T-cell (primary cell): ENCODE measurements at regions of chr5 and their contacts with region 1.

Region 1: GRCh38 chr5:160399402-160400353 is at the start of gene FAM200C:
- DNase-seq: peak in 34 of 35 experiments; percentile 14 to 74 (median 34)
- ATAC-seq: peak; percentile 78 to 86 (median 80)
- H3K4me3 ChIP-seq: peak within 1 kb of the TSS; percentile 72 to 84
- H3K4me3 Mint-ChIP-seq: peak within 1 kb of the TSS; percentile 89 to 95 (median 90)
- H3K27ac ChIP-seq: peak within 1 kb of the TSS; percentile 1
- H3K27ac Mint-ChIP-seq: peak within 1 kb of the TSS; percentile 73 to 82
- H3K4me1 ChIP-seq: peaks cover 2 to 8% of the 10 kb centered on the region in 2 experiments
- H3K4me1 Mint-ChIP-seq: peaks cover 21 to 23% (median 21%) of the 10 kb centered on the region in 3 donors
- H3K27me3 ChIP-seq: no peaks in the 10 kb centered on the region
- H3K27me3 Mint-ChIP-seq: no peaks in the 10 kb centered on the region
- total RNA-seq, gene FAM200C: 0.12 to 0.76 (median 0.58) TPM in 4 of 5 donors, not detected in the other

Region 2: GRCh38 chr5:159805021-159805420 is 594.7 kb before region 1 on chr5:
- CTCF ChIA-PET with region 1: interaction called in 1 of 2 experiments, 11 read pairs
- POLR2A ChIA-PET with region 1: no interaction called
- DNase-seq: peak in 1 of 35 experiments; percentile 14
- ATAC-seq: no peak
- H3K4me3 ChIP-seq: no peak overlapping the region
- H3K4me3 Mint-ChIP-seq: no peak overlapping the region
- H3K27ac ChIP-seq: no peak overlapping the region
- H3K27ac Mint-ChIP-seq: no peak overlapping the region
- H3K4me1 ChIP-seq: no peaks in the 10 kb centered on the region
- H3K4me1 Mint-ChIP-seq: no peaks in the 10 kb centered on the region
- H3K27me3 ChIP-seq: peaks cover 0 to 2% of the 10 kb centered on the region in 2 experiments
- H3K27me3 Mint-ChIP-seq: peaks cover 30 to 35% of the 10 kb centered on the region in 2 donors

Region 3: GRCh38 chr5:160333721-160334120 is 66.0 kb before region 1 on chr5:
- CTCF ChIA-PET with region 1: no interaction called
- POLR2A ChIA-PET with region 1: no interaction called
- DNase-seq: no peak
- ATAC-seq: no peak
- H3K4me3 ChIP-seq: no peak overlapping the region
- H3K4me3 Mint-ChIP-seq: no peak overlapping the region
- H3K27ac ChIP-seq: no peak overlapping the region
- H3K27ac Mint-ChIP-seq: no peak overlapping the region
- H3K4me1 ChIP-seq: no peaks in the 10 kb centered on the region
- H3K4me1 Mint-ChIP-seq: peaks cover 0 to 4% (median 2%) of the 10 kb centered on the region in 3 donors
- H3K27me3 ChIP-seq: peaks cover 0 to 3% of the 10 kb centered on the region in 2 experiments
- H3K27me3 Mint-ChIP-seq: peaks cover 2 to 7% of the 10 kb centered on the region in 2 donors

Region 4: DNA sequence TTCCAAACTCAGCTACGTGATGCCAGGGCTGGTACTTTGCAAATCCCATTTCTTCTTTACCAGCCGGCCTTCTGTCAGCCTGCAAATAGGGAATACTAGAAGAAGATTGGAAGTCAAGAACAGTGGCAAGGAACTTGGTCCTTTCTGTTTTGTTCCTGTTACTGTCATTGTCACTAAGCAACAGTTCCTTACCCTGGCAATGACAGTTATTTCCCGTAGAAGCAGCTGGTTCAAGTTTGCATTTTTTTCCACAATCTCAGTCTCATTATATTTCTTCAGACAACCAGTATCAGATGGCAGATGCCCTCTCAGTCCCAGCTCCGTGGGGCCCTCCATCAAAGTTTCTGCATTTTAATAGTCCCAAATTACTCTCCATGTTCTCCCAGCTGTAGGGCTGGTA is 20.2 kb before region 1 on chr5:
- CTCF ChIA-PET with region 1: no interaction called
- POLR2A ChIA-PET with region 1: no interaction called
- DNase-seq: no peak
- ATAC-seq: no peak
- H3K4me3 ChIP-seq: no peak overlapping the region
- H3K4me3 Mint-ChIP-seq: no peak overlapping the region
- H3K27ac ChIP-seq: no peak overlapping the region
- H3K27ac Mint-ChIP-seq: no peak overlapping the region
- H3K4me1 ChIP-seq: no peaks in the 10 kb centered on the region
- H3K4me1 Mint-ChIP-seq: no peaks in the 10 kb centered on the region
- H3K27me3 ChIP-seq: no peaks in the 10 kb centered on the region
- H3K27me3 Mint-ChIP-seq: peaks cover 30 to 31% of the 10 kb centered on the region in 2 donors

Region 5: GRCh38 chr5:160418561-160419457 is 19.1 kb after region 1 on chr5 and contains the start of gene SLU7:
- CTCF ChIA-PET with region 1: interaction called, 3 to 10 read pairs
- POLR2A ChIA-PET with region 1: interaction called, 7 to 8 read pairs
- DNase-seq: peak; percentile 84 to 96 (median 91)
- ATAC-seq: peak; percentile 81 to 84 (median 82)
- H3K4me3 ChIP-seq: peak within 1 kb of the TSS; percentile 86 to 96
- H3K4me3 Mint-ChIP-seq: peak within 1 kb of the TSS; percentile 95 to 99 (median 95)
- H3K27ac ChIP-seq: peak within 1 kb of the TSS; percentile 87
- H3K27ac Mint-ChIP-seq: peak within 1 kb of the TSS; percentile 95 to 99
- H3K4me1 ChIP-seq: peaks cover 32% of the 10 kb centered on the region in 2 experiments
- H3K4me1 Mint-ChIP-seq: peaks cover 73 to 82% (median 78%) of the 10 kb centered on the region in 3 donors
- H3K27me3 ChIP-seq: no peaks in the 10 kb centered on the region
- H3K27me3 Mint-ChIP-seq: no peaks in the 10 kb centered on the region
- total RNA-seq, gene SLU7: 64.9 to 76.8 (median 75.2) TPM

Region 6: DNA sequence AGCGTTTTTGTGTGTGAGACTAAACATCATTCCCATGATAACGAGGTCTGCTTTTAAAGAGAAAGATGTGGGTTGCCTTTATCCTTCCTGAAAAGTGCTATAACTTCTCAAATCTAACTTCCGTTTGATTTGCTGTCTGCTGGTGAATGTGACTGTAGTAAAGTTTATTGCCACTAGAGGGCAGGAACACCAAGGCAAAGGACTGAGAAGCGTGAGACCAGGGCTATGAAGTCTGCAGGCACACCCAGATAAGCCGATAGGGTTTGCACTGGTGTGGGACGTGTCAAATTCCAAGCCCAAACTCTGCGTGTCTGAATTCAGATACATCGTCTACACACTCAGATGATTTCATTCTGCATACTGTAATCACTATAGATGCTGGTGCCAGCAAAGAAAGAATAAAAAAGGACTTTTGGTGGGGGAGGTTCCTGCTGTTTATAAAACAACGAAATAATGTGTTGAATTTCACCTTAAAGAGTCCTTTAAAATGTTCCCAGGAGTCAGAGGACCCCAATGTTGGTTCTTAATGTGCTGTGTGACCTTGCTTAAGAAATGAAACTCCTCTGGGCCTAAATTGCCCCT is 109.2 kb after region 1 on chr5:
- CTCF ChIA-PET with region 1: no interaction called
- POLR2A ChIA-PET with region 1: no interaction called
- DNase-seq: peak in 33 of 35 experiments; percentile 14 to 92 (median 49)
- ATAC-seq: peak; percentile 71 to 83 (median 80)
- H3K4me3 ChIP-seq: no peak overlapping the region
- H3K4me3 Mint-ChIP-seq: no peak overlapping the region
- H3K27ac ChIP-seq: no peak overlapping the region
- H3K27ac Mint-ChIP-seq: peak overlapping the region; percentile 76 to 79
- H3K4me1 ChIP-seq: peaks cover 0 to 29% of the 10 kb centered on the region in 2 experiments
- H3K4me1 Mint-ChIP-seq: peaks cover 30 to 44% (median 31%) of the 10 kb centered on the region in 3 donors
- H3K27me3 ChIP-seq: peaks cover 0 to 3% of the 10 kb centered on the region in 2 experiments
- H3K27me3 Mint-ChIP-seq: peaks cover 3 to 13% of the 10 kb centered on the region in 2 donors